Left lung (tissue), 14 donors: ENCODE measurements at regions of chr18 and their contacts with region 1.

Region 1: DNA sequence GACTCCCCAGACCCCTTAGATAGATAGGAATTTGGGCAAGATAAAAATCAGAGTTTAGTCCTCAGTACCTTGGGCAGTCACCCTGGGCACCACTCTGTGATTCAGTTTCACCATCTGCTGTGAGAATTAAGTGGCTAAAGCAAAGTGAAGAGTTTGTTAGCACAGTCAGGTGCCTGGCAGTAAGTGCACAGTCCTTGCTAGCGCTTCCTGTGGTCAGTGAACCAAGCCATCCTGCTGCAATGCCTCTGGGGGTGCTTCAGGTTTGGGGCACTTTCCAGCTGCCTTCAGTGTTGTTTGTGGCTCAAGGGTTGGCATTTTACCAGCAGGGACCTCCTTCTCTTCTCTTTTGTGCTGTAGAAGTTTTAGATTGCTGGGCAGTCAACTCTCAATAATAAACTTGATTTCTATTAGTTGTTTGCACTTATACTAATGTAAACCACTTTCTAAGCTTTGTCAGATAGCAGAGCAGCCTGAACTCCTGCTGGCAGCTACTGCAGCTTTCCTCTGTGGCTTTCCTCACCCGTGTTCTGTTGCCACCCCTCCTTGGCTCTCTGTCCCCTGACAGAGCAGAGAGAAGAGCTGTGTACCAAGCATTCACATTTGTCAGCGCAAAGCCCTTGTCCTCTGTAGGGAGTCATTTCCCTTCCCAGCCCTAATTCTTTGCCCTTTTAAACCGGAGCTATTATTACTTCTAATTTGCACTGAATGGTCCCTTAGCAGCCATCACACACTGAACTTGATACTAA is 48.4 kb upstream of the RMP24 start:
- DNase-seq: no peak
- ATAC-seq: peak; percentile 62
- H3K4me3 ChIP-seq: no peak overlapping the region
- H3K27ac ChIP-seq: no peak overlapping the region
- H3K4me1 ChIP-seq: no peaks in the 10 kb centered on the region
- H3K27me3 ChIP-seq: no peaks in the 10 kb centered on the region
- CTCF ChIP-seq: no peak

Region 2: DNA sequence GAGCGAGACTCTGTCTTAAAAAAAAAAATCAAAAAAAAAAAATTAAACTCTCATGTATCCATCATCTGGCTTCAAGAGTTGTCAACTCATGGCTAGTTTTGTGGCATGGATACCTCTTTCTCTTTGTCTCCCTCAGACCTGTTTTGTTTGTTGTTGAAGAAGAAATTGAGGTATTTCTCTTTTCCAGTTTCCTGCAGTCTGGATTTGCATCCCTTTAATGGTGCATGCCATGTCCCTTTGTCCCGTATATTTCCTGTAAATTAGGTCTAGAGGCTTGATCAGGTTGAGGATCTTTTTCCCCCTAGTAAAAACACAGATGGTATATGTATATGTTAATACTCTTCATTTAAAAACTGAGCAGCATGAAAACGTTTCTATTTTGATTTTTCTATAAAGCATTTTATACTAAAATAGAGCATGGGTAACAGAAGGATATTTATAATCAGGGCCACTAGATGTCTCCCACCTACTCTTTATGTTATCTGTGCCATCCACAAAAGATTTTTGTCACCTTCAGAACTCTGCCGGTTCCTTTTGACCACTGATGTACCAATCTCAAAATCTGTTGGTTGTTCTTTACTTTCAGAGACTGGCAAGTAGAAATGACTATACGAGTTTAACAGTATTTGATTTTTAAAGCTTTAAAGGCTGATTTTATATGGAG is 262.5 kb before region 1 on chr18:
- intact Hi-C with region 1: no loop called
- DNase-seq: no peak
- ATAC-seq: no peak
- H3K4me3 ChIP-seq: no peak overlapping the region
- H3K27ac ChIP-seq: no peak overlapping the region
- H3K4me1 ChIP-seq: no peaks in the 10 kb centered on the region
- H3K27me3 ChIP-seq: no peaks in the 10 kb centered on the region
- CTCF ChIP-seq: no peak

Region 3: GRCh38 chr18:35688757-35689156 is 235.4 kb before region 1 on chr18:
- intact Hi-C with region 1: loop called in 1 of 2 experiments (anchors 10 kb)
- DNase-seq: no peak
- ATAC-seq: no peak
- H3K4me3 ChIP-seq: no peak overlapping the region
- H3K27ac ChIP-seq: no peak overlapping the region
- H3K4me1 ChIP-seq: no peaks in the 10 kb centered on the region
- H3K27me3 ChIP-seq: no peaks in the 10 kb centered on the region
- CTCF ChIP-seq: no peak

Region 4: GRCh38 chr18:35835833-35836232 is 88.3 kb before region 1 on chr18:
- intact Hi-C with region 1: no loop called
- DNase-seq: no peak
- ATAC-seq: no peak
- H3K4me3 ChIP-seq: no peak overlapping the region
- H3K27ac ChIP-seq: no peak overlapping the region
- H3K4me1 ChIP-seq: peaks cover 0 to 21% of the 10 kb centered on the region in 2 donors
- H3K27me3 ChIP-seq: no peaks in the 10 kb centered on the region
- CTCF ChIP-seq: no peak